ENCODE measurements at regions of chr7 and their contacts with region 1.

Region 1: DNA sequence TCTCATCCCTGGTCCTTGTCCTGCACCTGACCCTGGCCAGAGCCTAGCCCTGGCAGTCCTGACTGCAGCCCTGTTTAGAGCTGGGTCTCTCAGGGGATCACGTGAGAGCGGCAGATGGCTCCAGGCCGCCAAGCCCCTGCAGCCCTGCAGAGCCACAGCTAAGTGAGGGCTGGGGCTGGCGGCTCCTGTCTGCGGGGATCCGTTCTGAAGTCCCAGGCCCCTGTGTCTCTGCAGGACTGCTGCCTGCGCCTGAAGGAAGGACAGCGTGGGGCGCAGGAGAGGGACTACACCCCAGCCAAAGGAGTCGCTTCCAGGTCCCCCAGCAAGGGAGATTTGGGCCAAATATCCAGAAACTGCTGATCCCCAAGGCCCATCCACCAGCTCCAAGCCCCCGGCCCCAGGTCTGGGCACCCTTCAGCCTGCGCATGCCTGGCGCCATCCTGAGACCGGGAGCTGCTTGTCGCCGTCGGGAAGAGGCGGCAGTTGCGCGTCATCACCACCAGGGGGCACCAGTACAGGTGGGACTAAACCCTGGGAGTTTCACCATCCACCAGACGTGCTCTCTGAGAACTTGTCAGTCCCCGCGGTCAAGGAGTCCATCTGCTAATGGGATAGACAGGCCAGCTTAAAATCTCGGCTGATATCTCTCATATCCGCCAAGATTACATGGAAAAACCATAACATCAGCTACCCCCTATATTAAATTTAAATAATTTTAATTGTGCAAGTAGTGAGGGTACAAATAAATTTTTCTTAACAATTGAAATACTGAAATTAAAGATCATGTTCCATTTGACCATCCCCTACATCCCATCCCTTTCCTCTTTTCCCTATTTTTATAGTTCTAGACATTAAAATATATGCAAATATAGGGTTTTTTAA is 25.1 kb upstream of the GHRHR start:
- DNase-seq: peak; percentile 84 to 90
- ATAC-seq: peak; percentile 68 to 91 (median 84)
- H3K4me3 ChIP-seq: peak overlapping the region in 7 of 10 donors; percentile 1 to 37 (median 26)
- H3K27ac ChIP-seq: peak overlapping the region in 1 of 10 donors; percentile 1
- H3K4me1 ChIP-seq: peaks cover 2 to 32% (median 15%) of the 10 kb centered on the region in 9 donors
- H3K27me3 ChIP-seq: peaks cover 0 to 21% (median 0%) of the 10 kb centered on the region in 7 donors
- CTCF ChIP-seq: peak; percentile 95 to 99 (median 99)

Region 2: GRCh38 chr7:30750683-30751650 is 187.7 kb before region 1 on chr7:
- intact Hi-C with region 1: loop called in 3 of 10 experiments (anchors 5 to 10 kb)
- DNase-seq: peak; percentile 73 to 83
- ATAC-seq: peak; percentile 65 to 84 (median 76)
- H3K4me3 ChIP-seq: peak overlapping the region in 8 of 10 donors; percentile 42 to 59 (median 54)
- H3K27ac ChIP-seq: peak overlapping the region; percentile 62 to 93 (median 82)
- H3K4me1 ChIP-seq: peaks cover 16 to 69% (median 48%) of the 10 kb centered on the region in 9 donors
- H3K27me3 ChIP-seq: no peaks in the 10 kb centered on the region
- CTCF ChIP-seq: no peak

Region 3: GRCh38 chr7:30974605-30975255 is 36.1 kb after region 1 on chr7:
- intact Hi-C with region 1: loop called in 2 of 10 experiments (anchors 2 to 5 kb)
- DNase-seq: peak; percentile 48 to 69
- ATAC-seq: peak; percentile 69 to 89 (median 79)
- H3K4me3 ChIP-seq: no peak overlapping the region
- H3K27ac ChIP-seq: no peak overlapping the region
- H3K4me1 ChIP-seq: peaks cover 0 to 16% (median 7%) of the 10 kb centered on the region in 9 donors
- H3K27me3 ChIP-seq: peaks cover 0 to 36% (median 0%) of the 10 kb centered on the region in 7 donors
- CTCF ChIP-seq: peak; percentile 66 to 86 (median 79)

Measured in heart right ventricle (tissue), 16 donors.